Endothelial cell of umbilical vein (primary cell): ENCODE measurements at regions of chr16 and their contacts with region 1.

Region 1: DNA sequence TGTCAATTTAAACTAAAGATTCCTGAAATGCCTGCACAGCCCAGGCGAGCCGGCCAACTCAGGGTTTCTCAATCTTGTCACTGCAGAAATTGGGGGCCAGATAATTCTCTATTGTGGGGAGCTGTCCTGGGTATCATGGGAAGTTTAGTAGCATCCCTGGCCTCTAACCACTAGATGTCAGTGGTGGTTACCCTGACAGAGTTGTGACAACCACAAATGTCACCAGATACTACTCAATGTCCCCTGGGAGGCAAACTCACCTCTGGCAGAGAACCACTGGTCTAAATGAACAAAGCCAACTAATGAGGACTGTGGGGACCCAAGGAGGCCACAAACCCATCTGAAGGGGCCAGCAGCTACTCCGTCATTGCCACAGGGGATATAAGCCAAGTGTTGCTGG is 90.9 kb downstream of the MYH11 start:
- DNase-seq: peak; percentile 44
- H3K4me3 ChIP-seq: no peak overlapping the region
- H3K27ac ChIP-seq: no peak overlapping the region
- H3K4me1 ChIP-seq: no peaks in the 10 kb centered on the region
- H3K27me3 ChIP-seq: peaks cover 2 to 6% of the 10 kb centered on the region in 2 experiments
- CTCF ChIP-seq: peak; percentile 61 to 72
- POLR2A ChIP-seq: no peak

Region 2: GRCh38 chr16:16191493-16192167 is 425.8 kb after region 1 on chr16:
- CTCF ChIA-PET with region 1: interaction called, 6 read pairs
- POLR2A ChIA-PET with region 1: no interaction called
- dilution Hi-C with region 1: no loop called
- intact Hi-C with region 1: loop called (anchors 1 kb)
- DNase-seq: peak; percentile 77
- H3K4me3 ChIP-seq: no peak overlapping the region
- H3K27ac ChIP-seq: no peak overlapping the region
- H3K4me1 ChIP-seq: no peaks in the 10 kb centered on the region
- H3K27me3 ChIP-seq: peaks cover 0 to 1% of the 10 kb centered on the region in 2 experiments
- CTCF ChIP-seq: no peak
- POLR2A ChIP-seq: no peak